Colonic mucosa (tissue), 4 donors: ENCODE measurements at regions of chr4 and their contacts with region 1.

Region 1: DNA sequence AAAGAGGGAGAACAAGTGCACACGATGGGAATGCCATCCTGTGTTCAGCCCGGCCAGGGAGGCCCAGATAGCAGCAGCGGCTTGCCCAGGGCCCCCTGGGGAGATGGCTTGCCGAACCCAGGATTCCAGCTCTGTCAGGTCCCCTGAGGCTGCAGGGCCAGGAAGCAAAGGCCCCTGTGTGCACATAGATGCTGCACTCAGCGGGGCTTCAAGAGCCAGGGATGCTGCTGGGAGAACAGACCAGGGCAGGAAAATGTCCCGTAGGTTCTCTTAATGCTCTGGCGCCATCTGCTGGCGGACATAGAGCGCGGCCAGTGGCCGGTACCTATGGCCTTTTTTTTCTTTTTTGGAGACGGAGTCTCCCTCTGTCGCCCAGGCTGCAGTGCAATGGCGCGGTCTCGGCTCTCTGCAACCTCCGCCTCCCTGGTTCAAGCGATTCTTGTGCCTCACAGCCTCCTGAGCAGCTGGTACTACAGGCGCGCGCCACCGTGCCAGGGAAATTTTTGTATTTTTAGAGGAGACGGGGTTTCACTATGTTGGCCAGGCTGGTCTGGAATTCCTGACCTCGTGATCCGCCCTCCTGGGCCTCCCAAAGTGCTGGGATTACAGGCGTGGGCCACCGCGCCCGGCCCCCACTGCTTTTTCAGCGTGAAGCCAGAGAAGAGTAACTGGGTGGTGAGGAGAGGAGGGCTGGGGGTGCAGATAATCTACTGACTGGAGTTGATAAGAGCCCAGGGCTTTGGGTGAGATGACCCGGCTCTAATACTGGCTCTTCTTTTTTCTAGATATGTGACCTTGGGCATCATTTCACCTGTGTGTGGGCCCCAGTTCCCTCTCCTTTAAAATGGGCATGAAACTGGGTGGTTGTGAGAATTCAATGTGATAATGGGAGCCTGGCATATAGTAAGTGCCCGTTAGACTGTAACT is 22.5 kb downstream of the MED28 start:
- DNase-seq: peak; percentile 75
- H3K4me3 ChIP-seq: no peak overlapping the region
- H3K27ac ChIP-seq: no peak overlapping the region
- H3K4me1 ChIP-seq: no peaks in the 10 kb centered on the region
- H3K27me3 ChIP-seq: no peaks in the 10 kb centered on the region
- CTCF ChIP-seq: peak; percentile 89

Region 2: GRCh38 chr4:16294455-16294854 is 1342.5 kb before region 1 on chr4:
- intact Hi-C with region 1: no loop called
- DNase-seq: no peak
- H3K4me3 ChIP-seq: no peak overlapping the region
- H3K27ac ChIP-seq: no peak overlapping the region
- H3K4me1 ChIP-seq: no peaks in the 10 kb centered on the region
- H3K27me3 ChIP-seq: no peaks in the 10 kb centered on the region
- CTCF ChIP-seq: no peak

Region 3: GRCh38 chr4:17544831-17545234 is 92.1 kb before region 1 on chr4:
- intact Hi-C with region 1: loop called (anchors 5 kb)
- DNase-seq: no peak
- H3K4me3 ChIP-seq: no peak overlapping the region
- H3K27ac ChIP-seq: no peak overlapping the region
- H3K4me1 ChIP-seq: no peaks in the 10 kb centered on the region
- H3K27me3 ChIP-seq: no peaks in the 10 kb centered on the region
- CTCF ChIP-seq: no peak